ENCODE measurements at regions of chr4 and their contacts with region 1.

Region 1: DNA sequence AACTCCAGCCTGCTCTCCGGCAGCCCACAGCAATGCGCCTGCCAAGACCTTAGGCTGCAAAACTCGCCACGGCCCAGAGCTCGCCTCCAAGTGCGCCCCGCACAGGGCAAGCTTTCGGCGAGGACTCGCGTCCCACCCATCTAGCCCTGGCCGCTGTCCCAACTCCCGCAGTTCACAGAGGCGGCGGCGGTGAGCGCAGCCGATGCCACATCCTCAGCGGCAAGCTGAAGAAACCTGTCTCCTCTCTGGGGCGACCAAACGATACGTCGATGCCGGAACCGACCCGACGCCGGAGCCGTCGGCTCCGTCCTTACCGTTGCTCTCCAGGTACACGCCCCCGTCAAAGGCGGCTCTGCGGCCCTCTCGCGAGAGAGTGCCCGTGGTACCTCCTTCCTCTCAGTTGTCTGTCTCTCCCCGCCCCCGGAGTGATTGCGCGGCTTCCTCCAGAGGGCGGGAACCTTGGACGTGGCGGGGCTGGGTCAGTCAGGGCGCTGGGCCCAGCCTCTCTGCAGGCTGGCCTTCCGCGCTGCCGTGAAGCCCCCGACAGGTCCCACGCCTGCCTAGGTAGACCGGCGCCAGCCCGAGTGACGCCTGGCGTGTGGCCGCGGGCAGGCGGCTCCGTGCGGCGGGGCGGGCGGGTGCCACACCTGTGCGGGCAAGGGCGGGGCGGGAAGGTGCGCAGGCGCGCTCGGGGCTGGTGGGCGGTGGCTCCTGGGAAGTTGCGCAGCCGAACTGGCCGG is 380 bp upstream of the RAB33B start:
- DNase-seq: peak; percentile 96
- ATAC-seq: peak; percentile 95
- H3K4me3 ChIP-seq: peak overlapping the region; percentile 69 to 98 (median 80)
- H3K27ac ChIP-seq: peak overlapping the region; percentile 88 to 96 (median 95)
- H3K4me1 ChIP-seq: peaks cover 30 to 38% of the 10 kb centered on the region in 2 donors
- H3K27me3 ChIP-seq: no peaks in the 10 kb centered on the region
- CTCF ChIP-seq: peak in 2 of 5 experiments; percentile 6 to 9
- POLR2A ChIP-seq: no peak

Region 2: GRCh38 chr4:138897811-138898226 is 555.7 kb before region 1 on chr4:
- in situ Hi-C with region 1: no loop called
- intact Hi-C with region 1: no loop called
- DNase-seq: peak in 1 of 2 donors; percentile 5
- ATAC-seq: peak; percentile 97 to 99
- H3K4me3 ChIP-seq: peak overlapping the region in 2 of 4 donors; percentile 3 to 21
- H3K27ac ChIP-seq: peak overlapping the region; percentile 69 to 85 (median 76)
- H3K4me1 ChIP-seq: peaks cover 12 to 19% of the 10 kb centered on the region in 2 donors
- H3K27me3 ChIP-seq: no peaks in the 10 kb centered on the region
- CTCF ChIP-seq: no peak
- POLR2A ChIP-seq: no peak

Region 3: DNA sequence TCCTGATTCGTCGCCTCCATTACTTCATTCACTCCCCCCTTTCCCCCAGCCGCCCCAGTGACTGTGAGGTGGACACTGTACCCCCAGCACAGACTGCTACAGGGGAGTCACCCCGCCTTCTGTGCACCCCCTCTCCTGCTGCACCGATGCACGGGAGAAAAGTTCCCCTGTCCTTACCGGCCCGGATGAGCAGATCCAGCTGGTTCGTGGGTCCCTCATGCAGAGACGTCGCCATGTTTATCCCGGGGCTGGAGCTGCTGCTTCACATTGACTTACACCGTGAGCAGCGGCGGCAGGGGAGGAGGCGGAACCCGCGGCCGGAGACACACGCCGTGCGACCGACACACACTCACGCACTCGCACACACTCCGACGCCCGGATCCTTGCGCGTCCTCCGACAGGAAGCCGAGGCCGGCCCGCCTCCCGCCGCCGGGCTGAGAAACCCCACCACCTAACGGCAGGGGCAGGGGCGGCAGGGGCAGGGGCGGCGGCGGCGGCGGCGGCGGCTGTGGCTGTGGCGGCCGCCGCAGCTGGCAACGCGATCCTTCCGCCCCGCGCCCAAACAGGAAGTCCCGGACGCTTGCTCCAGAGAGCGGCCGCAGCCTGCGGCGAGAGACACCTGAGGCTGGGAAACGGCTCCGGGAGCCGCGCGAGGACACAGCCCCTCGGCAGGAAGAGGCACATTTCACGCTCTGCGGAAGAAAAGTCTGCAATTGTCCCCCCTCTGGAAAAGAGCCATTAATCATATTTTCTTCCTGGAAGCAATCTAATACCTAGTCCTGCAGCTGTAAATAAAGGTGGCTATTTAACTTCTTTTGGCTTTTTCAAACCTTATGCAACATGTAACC is 369.4 kb before region 1 on chr4:
- in situ Hi-C with region 1: no loop called
- intact Hi-C with region 1: loop called (anchors 10 kb)
- DNase-seq: peak; percentile 81 to 91
- ATAC-seq: peak; percentile 66 to 69
- H3K4me3 ChIP-seq: peak overlapping the region; percentile 65 to 90 (median 70)
- H3K27ac ChIP-seq: peak overlapping the region; percentile 92 to 98 (median 92)
- H3K4me1 ChIP-seq: peaks cover 38 to 41% of the 10 kb centered on the region in 2 donors
- H3K27me3 ChIP-seq: no peaks in the 10 kb centered on the region
- CTCF ChIP-seq: peak in 4 of 5 experiments; percentile 23 to 56 (median 48)
- POLR2A ChIP-seq: peak; percentile 37 to 58

Region 4: GRCh38 chr4:139177868-139178611 is 275.5 kb before region 1 on chr4:
- in situ Hi-C with region 1: no loop called
- intact Hi-C with region 1: loop called (anchors 5 kb)
- DNase-seq: peak; percentile 93 to 95
- ATAC-seq: peak; percentile 70 to 71
- H3K4me3 ChIP-seq: peak overlapping the region; percentile 81 to 96 (median 88)
- H3K27ac ChIP-seq: peak overlapping the region; percentile 98 to 100 (median 100)
- H3K4me1 ChIP-seq: peaks cover 13 to 28% of the 10 kb centered on the region in 2 donors
- H3K27me3 ChIP-seq: no peaks in the 10 kb centered on the region
- CTCF ChIP-seq: no peak
- POLR2A ChIP-seq: peak; percentile 89 to 93

Region 5: GRCh38 chr4:139301113-139301820 is 152.3 kb before region 1 on chr4 and contains the start of gene NAA15:
- in situ Hi-C with region 1: no loop called
- intact Hi-C with region 1: loop called (anchors 2 kb)
- DNase-seq: peak; percentile 96 to 98
- ATAC-seq: peak; percentile 79 to 80
- H3K4me3 ChIP-seq: peak within 1 kb of the TSS; percentile 71 to 95 (median 86)
- H3K27ac ChIP-seq: peak within 1 kb of the TSS; percentile 94 to 98 (median 96)
- H3K4me1 ChIP-seq: peaks cover 50 to 60% of the 10 kb centered on the region in 2 donors
- H3K27me3 ChIP-seq: no peaks in the 10 kb centered on the region
- CTCF ChIP-seq: no peak
- POLR2A ChIP-seq: peak; percentile 89 to 95
- total RNA-seq, gene NAA15: 25.0 to 48.8 (median 37.2) TPM

Region 6: GRCh38 chr4:139416073-139416673 is 37.4 kb before region 1 on chr4:
- in situ Hi-C with region 1: no loop called
- intact Hi-C with region 1: loop called (anchors 1 kb)
- DNase-seq: no peak
- ATAC-seq: no peak
- H3K4me3 ChIP-seq: no peak overlapping the region
- H3K27ac ChIP-seq: no peak overlapping the region
- H3K4me1 ChIP-seq: no peaks in the 10 kb centered on the region
- H3K27me3 ChIP-seq: no peaks in the 10 kb centered on the region
- CTCF ChIP-seq: peak; percentile 51 to 76 (median 57)
- POLR2A ChIP-seq: no peak

Region 7: DNA sequence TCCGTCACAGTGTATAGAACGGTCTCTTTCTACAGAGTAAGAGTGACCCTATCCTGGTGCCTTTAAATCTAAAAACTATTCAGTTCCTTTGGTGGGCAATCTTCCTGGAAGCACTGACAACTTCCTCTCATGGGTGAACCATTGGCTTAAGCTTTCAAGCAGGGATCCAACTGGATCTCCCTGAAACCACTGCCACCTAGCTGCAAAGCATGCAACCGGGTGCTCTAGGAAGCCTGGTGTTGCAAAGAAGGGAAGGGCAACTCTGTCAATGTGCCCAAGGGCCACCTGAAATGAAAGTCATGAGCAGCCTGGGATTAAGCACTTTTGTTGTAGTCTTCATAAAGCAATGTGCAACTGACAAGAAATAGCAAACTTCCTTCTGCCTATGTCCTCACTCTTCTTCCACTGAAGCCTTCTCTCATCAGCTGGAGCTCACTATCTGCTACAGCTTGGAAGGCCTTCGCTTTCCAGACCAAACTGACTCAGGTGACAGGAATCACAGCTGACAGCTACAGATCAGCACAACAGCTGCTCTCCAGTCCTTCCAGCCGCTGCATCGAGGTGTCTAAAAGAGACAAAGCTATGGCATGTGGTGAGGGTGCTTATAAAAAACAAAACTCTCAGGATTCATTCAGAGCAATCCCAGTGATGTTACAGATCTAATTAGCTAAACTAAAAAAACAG is 56.3 kb after region 1 on chr4:
- in situ Hi-C with region 1: no loop called
- intact Hi-C with region 1: loop called (anchors 2 kb)
- DNase-seq: no peak
- ATAC-seq: peak; percentile 36 to 69
- H3K4me3 ChIP-seq: no peak overlapping the region
- H3K27ac ChIP-seq: peak overlapping the region; percentile 63 to 83 (median 74)
- H3K4me1 ChIP-seq: peaks cover 48 to 55% of the 10 kb centered on the region in 2 donors
- H3K27me3 ChIP-seq: no peaks in the 10 kb centered on the region
- CTCF ChIP-seq: peak in 4 of 5 experiments; percentile 28 to 59 (median 42)
- POLR2A ChIP-seq: no peak

Region 8: GRCh38 chr4:139530833-139531427 is 77.4 kb after region 1 on chr4:
- in situ Hi-C with region 1: no loop called
- intact Hi-C with region 1: loop called (anchors 2 kb)
- DNase-seq: peak in 1 of 2 donors; percentile 54
- ATAC-seq: peak; percentile 27 to 51
- H3K4me3 ChIP-seq: no peak overlapping the region
- H3K27ac ChIP-seq: peak overlapping the region; percentile 4 to 92 (median 50)
- H3K4me1 ChIP-seq: peaks cover 37 to 40% of the 10 kb centered on the region in 2 donors
- H3K27me3 ChIP-seq: no peaks in the 10 kb centered on the region
- CTCF ChIP-seq: peak; percentile 44 to 68 (median 64)
- POLR2A ChIP-seq: no peak

Measured in gastrocnemius medialis (tissue), 4 donors.